Posterior vena cava (tissue), 2 donors: ENCODE measurements at regions of chr1 and their contacts with region 1.

Region 1: DNA sequence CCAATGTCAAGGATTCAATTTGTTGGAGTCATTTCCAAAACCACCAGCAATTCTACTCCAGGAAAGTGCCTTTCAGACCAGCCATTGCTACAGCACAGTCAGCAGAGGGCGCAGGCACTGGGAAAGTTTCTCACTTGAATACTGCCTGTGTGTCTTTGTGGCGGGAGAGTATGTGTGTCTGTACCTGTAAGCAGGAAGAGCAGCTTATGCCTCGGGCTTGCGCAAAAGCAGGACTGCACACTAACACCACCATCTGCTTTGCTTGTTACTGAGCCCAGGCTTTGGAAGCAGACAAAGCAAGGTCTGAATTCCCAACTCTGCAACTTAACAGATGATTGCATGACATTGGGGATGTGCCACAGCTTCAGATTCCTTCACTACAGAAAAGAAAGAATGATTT is 7.0 kb upstream of the CTSE start:
- DNase-seq: peak; percentile 86

Region 2: GRCh38 chr1:206012086-206012859 is 18.4 kb before region 1 on chr1:
- intact Hi-C with region 1: loop called in 1 of 2 experiments (anchors 1 kb)
- DNase-seq: peak; percentile 93